ENCODE measurements at regions of chr19 and their contacts with region 1.

Region 1: DNA sequence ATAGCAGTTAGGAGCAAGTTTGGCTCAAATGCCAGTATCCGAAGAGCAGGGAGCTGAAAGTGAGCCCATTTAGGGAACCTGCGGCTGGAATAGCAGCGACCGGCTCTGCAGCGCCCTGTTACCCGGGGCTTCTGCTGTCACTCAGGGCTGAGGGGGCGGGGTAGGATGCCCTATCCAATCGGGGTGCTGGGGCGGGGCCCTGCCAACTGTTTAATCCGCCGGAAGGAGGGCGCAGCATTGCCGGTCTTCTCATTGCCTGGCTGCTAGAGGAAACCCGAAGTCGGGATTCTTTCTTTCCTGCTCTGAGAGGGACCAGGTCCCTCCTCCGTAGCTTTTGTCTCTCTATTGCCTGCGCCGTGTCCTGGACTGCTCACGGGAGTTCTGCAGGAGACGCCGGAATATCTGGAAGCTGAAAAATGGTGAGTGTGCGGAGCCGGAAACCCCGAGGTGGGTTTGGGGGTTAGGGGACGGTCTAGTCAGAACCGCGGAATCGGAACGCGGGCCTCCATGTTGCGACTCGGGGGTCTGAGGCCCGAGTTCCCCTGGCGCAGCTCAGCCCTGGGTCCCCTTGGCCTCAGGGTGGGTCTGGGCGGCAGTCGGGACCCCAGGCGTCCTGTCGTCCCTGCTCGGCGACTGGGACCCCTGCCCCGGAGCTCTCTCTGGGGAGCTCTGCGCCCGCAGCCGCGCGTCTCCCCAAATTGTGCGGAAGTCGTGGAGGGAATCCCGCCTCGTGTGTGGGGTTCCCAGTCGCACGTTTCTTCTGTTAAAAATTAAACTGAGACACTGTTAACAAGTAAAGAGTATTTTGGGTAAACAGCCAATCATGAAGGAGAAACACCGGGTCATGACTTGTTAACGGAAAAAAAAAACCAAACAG is 22.8 kb downstream of the ZNF763 start:
- DNase-seq: peak; percentile 99
- ATAC-seq: peak; percentile 97
- H3K4me3 Mint-ChIP-seq: peak overlapping the region; percentile 94
- H3K27ac Mint-ChIP-seq: peak overlapping the region; percentile 97
- H3K4me1 Mint-ChIP-seq: peaks cover 31% of the 10 kb centered on the region
- H3K27me3 Mint-ChIP-seq: no peaks in the 10 kb centered on the region
- CTCF ChIP-seq: no peak

Region 2: GRCh38 chr19:11881151-11881800 is 106.4 kb before region 1 on chr19:
- CTCF ChIA-PET with region 1: interaction called, 16 read pairs
- POLR2A ChIA-PET with region 1: no interaction called
- intact Hi-C with region 1: no loop called
- DNase-seq: peak; percentile 76
- ATAC-seq: peak; percentile 81
- H3K4me3 Mint-ChIP-seq: no peak overlapping the region
- H3K27ac Mint-ChIP-seq: no peak overlapping the region
- H3K4me1 Mint-ChIP-seq: peaks cover 2% of the 10 kb centered on the region
- H3K27me3 Mint-ChIP-seq: peaks cover 1% of the 10 kb centered on the region
- CTCF ChIP-seq: peak; percentile 68

Region 3: GRCh38 chr19:11964858-11965645 is 22.6 kb before region 1 on chr19 and contains the start of gene ZNF763:
- CTCF ChIA-PET with region 1: interaction called, 76 read pairs
- POLR2A ChIA-PET with region 1: interaction called, 13 read pairs
- intact Hi-C with region 1: no loop called
- DNase-seq: peak; percentile 97
- ATAC-seq: peak; percentile 97
- H3K4me3 Mint-ChIP-seq: peak within 1 kb of the TSS; percentile 88
- H3K27ac Mint-ChIP-seq: peak within 1 kb of the TSS; percentile 92
- H3K4me1 Mint-ChIP-seq: peaks cover 24% of the 10 kb centered on the region
- H3K27me3 Mint-ChIP-seq: no peaks in the 10 kb centered on the region
- CTCF ChIP-seq: no peak
- total RNA-seq, gene ZNF763: 0.83 to 1.7 TPM

Region 4: GRCh38 chr19:12000152-12000981 is 12.7 kb after region 1 on chr19:
- CTCF ChIA-PET with region 1: interaction called, 21 read pairs
- POLR2A ChIA-PET with region 1: interaction called, 5 read pairs
- intact Hi-C with region 1: no loop called
- DNase-seq: peak; percentile 50
- ATAC-seq: peak; percentile 90
- H3K4me3 Mint-ChIP-seq: peak overlapping the region; percentile 1
- H3K27ac Mint-ChIP-seq: peak overlapping the region; percentile 67
- H3K4me1 Mint-ChIP-seq: peaks cover 23% of the 10 kb centered on the region
- H3K27me3 Mint-ChIP-seq: no peaks in the 10 kb centered on the region
- CTCF ChIP-seq: no peak

Region 5: DNA sequence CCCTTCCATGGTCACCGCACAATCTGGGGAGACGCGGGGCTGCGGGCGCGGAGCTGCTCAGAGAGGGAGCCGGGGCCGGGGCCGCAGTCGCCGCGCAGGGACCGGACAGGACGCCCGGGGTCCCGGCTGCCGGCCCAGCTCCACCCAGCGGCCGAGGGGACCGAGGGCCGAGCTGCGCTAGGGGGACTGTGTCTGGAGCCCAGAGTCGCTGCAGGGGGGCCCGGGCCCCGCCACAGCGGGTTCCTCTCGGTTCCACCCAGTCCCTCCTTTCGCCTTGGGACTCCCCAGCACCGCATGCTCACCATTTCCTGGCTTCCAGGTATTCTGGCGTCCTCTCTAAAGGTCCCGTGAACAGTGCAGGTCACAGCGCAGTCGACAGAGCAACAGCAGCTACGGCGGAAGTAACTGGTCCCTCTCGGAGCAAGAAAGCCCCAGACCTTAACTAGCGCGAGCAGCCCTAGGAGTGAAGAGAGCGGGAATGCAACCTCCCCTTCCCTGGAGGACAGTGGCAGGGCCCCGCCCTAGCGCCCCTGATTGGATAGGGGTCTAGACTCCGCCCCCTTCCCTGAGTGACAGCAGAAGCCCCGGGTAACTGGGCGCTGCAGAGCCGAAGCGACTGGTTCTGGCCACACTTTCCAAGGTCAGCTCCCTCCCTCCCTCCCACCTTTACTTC is 65.0 kb after region 1 on chr19 and contains the start of gene ZNF878:
- CTCF ChIA-PET with region 1: interaction called, 13 read pairs
- POLR2A ChIA-PET with region 1: interaction called, 12 read pairs
- intact Hi-C with region 1: no loop called
- DNase-seq: peak; percentile 81
- ATAC-seq: peak; percentile 89
- H3K4me3 Mint-ChIP-seq: peak within 1 kb of the TSS; percentile 83
- H3K27ac Mint-ChIP-seq: peak within 1 kb of the TSS; percentile 80
- H3K4me1 Mint-ChIP-seq: peaks cover 13% of the 10 kb centered on the region
- H3K27me3 Mint-ChIP-seq: peaks cover 20% of the 10 kb centered on the region
- CTCF ChIP-seq: no peak
- total RNA-seq, gene ZNF878: 0.65 to 1.0 TPM

Measured in activated CD8-positive, alpha-beta T cell treated with anti-CD3 and anti-CD28 coated beads for 36 hours (primary cell).